Sigmoid colon (tissue), 7 donors: ENCODE measurements at regions of chr11 and their contacts with region 1.

Region 1: GRCh38 chr11:108497317-108498045 is 703 bp downstream of the POGLUT3 start:
- DNase-seq: peak; percentile 96
- H3K4me3 ChIP-seq: peak overlapping the region; percentile 57 to 84 (median 74)
- H3K27ac ChIP-seq: peak overlapping the region; percentile 92 to 98 (median 96)
- H3K4me1 ChIP-seq: peaks cover 0 to 16% (median 7%) of the 10 kb centered on the region in 4 donors
- H3K27me3 ChIP-seq: no peaks in the 10 kb centered on the region
- CTCF ChIP-seq: no peak
- EP300 ChIP-seq: peak in 1 of 4 donors; percentile 28
- POLR2A ChIP-seq: peak; percentile 63 to 71

Region 2: GRCh38 chr11:108414958-108415357 is 82.5 kb before region 1 on chr11:
- intact Hi-C with region 1: no loop called
- DNase-seq: no peak
- H3K4me3 ChIP-seq: no peak overlapping the region
- H3K27ac ChIP-seq: no peak overlapping the region
- H3K4me1 ChIP-seq: no peaks in the 10 kb centered on the region
- H3K27me3 ChIP-seq: no peaks in the 10 kb centered on the region
- CTCF ChIP-seq: no peak
- EP300 ChIP-seq: no peak
- POLR2A ChIP-seq: no peak

Region 3: DNA sequence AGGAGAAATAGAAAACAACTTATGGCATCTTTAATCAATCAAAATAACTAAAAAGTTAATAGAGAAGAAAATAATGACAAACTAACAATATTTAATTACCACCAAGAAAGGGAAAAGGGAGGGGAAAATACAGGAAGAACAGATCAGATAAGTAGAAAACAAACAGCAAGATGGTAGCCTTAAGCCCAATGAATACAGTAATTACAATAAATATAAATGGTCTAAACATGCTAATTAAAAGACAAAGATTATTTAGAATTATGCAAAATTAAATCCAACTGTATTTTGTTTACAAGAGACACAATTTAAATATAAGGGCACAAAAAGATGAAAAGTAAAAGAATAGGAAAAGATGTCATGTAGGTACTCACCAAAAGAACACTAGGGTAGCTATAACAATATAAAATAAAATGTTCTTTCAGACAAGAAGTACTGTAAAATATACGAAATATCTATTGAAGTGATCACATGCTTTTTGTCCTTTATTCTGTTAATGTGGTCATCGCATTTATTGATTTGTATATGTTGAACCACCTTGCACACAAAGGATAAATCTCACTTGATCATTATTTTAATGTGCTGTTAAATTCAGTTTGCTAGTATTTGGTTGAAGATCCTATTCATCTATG is 44.2 kb before region 1 on chr11:
- intact Hi-C with region 1: no loop called
- DNase-seq: no peak
- H3K4me3 ChIP-seq: no peak overlapping the region
- H3K27ac ChIP-seq: no peak overlapping the region
- H3K4me1 ChIP-seq: no peaks in the 10 kb centered on the region
- H3K27me3 ChIP-seq: no peaks in the 10 kb centered on the region
- CTCF ChIP-seq: no peak
- EP300 ChIP-seq: no peak
- POLR2A ChIP-seq: no peak

Region 4: DNA sequence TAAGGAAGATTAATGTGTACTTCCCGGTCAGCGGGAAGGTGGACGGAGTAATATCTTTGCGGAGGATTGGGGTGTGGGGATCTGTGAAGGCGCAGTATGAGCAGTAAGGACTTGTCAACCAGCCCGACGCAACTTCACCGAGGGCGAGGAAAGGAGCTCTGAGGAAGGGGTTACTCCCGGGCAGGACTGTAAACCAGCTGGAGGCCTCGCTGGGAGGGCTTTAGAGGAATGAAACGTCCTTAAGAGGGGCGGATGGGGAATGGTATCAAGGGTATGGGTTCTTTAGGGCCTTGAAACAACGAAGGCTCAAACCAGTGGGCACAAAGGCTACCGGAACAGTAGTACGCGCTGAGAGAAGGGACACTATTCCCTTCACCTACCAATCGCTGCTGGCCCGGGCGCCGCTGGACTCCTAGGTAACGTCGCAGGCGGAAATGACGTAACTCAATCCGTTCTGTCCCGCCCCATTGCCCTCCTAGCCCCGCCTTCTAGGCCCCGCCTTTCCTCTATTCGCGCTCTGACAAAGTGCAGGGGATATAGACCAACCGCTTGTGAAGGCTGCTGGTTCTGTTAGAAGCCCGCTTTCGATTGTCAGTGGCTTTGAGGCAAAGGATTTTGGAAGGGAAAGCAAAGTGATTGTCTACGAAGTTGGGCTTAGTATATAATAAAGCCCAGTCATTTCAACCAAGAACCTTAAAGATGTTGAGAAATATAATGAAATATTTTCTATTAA is 30.2 kb before region 1 on chr11 and contains the start of gene C11orf65:
- intact Hi-C with region 1: loop called (anchors 1 kb)
- DNase-seq: peak; percentile 99
- H3K4me3 ChIP-seq: peak within 1 kb of the TSS; percentile 56 to 73 (median 64)
- H3K27ac ChIP-seq: peak within 1 kb of the TSS; percentile 94 to 98 (median 97)
- H3K4me1 ChIP-seq: peaks cover 0 to 11% (median 0%) of the 10 kb centered on the region in 4 donors
- H3K27me3 ChIP-seq: no peaks in the 10 kb centered on the region
- CTCF ChIP-seq: no peak
- EP300 ChIP-seq: peak in 1 of 4 donors; percentile 24
- POLR2A ChIP-seq: peak; percentile 93 to 96
- total RNA-seq, gene C11orf65: 0.14 to 1.1 (median 0.51) TPM

Region 5: DNA sequence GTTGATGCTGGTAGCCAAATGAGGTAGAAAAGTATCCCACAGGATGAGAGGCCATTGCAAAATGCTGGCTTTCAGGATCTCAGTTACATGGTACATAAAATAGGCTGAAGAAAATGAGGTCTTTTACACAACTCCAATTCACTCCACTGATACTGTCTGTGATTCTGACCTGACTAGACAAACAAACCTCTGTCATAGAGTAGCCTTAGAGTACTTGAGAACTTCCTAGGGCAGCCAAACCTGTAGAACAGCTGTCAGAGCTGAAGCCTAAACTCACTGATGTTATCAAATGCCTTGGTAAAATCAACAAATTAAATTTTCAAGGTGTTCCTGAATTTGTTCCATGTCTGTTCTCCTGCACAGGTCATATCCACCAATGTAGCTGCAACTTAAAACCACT is 27.0 kb after region 1 on chr11:
- intact Hi-C with region 1: no loop called
- DNase-seq: no peak
- H3K4me3 ChIP-seq: no peak overlapping the region
- H3K27ac ChIP-seq: no peak overlapping the region
- H3K4me1 ChIP-seq: no peaks in the 10 kb centered on the region
- H3K27me3 ChIP-seq: no peaks in the 10 kb centered on the region
- CTCF ChIP-seq: no peak
- EP300 ChIP-seq: no peak
- POLR2A ChIP-seq: no peak